ENCODE measurements at regions of chr2 and their contacts with region 1.

Region 1: GRCh38 chr2:102301867-102302362 is 9.4 kb upstream of the IL1RL1 start:
- DNase-seq: peak; percentile 51
- H3K4me3 ChIP-seq: no peak overlapping the region
- H3K27ac ChIP-seq: peak overlapping the region; percentile 2
- H3K4me1 ChIP-seq: peaks cover 38% of the 10 kb centered on the region
- H3K27me3 ChIP-seq: no peaks in the 10 kb centered on the region
- CTCF ChIP-seq: peak; percentile 40 to 41
- POLR2A ChIP-seq: no peak

Region 2: DNA sequence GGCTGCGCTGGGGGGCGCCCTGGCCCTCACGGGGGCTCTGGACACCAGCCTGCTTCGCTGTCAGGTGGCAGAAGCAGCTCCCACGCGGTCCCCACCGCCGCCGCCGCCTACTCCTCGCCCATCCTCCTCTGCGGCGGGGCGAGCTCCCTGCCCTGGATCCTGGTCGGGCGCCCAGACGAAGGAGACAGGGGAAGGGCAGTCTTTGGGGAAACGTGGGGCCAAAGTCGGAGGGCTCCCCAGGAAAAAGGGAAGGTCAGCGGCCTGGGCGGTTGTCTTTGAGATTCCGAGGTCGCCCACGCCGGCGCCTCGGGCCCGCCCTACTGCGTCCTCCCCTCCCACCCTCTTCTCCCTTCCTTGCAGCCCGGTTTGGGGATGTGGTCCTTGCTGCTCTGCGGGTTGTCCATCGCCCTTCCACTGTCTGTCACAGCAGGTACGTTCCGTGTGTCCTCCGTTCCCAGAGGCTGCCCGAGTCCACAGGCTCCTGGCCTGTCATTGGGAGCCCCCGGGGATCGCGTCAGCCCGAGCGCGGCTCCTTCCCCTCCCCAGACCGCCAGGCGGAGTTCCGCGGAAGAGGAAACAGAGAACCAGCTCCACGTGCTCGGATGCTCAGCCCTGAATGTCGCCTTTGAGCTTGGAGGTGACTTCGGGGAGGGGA is 114.3 kb before region 1 on chr2:
- CTCF ChIA-PET with region 1: no interaction called
- POLR2A ChIA-PET with region 1: no interaction called
- dilution Hi-C with region 1: no loop called
- intact Hi-C with region 1: loop called (anchors 1 kb)
- DNase-seq: peak; percentile 40
- H3K4me3 ChIP-seq: peak overlapping the region; percentile 34 to 47 (median 38)
- H3K27ac ChIP-seq: no peak overlapping the region
- H3K4me1 ChIP-seq: peaks cover 18% of the 10 kb centered on the region
- H3K27me3 ChIP-seq: no peaks in the 10 kb centered on the region
- CTCF ChIP-seq: peak in 1 of 2 donors; percentile 43
- POLR2A ChIP-seq: no peak

Region 3: GRCh38 chr2:102271844-102272243 is 30.1 kb before region 1 on chr2:
- CTCF ChIA-PET with region 1: interaction called, 19 read pairs
- POLR2A ChIA-PET with region 1: no interaction called
- dilution Hi-C with region 1: no loop called
- intact Hi-C with region 1: loop called (anchors 2 kb)
- DNase-seq: peak; percentile 15
- H3K4me3 ChIP-seq: no peak overlapping the region
- H3K27ac ChIP-seq: no peak overlapping the region
- H3K4me1 ChIP-seq: peaks cover 7% of the 10 kb centered on the region
- H3K27me3 ChIP-seq: no peaks in the 10 kb centered on the region
- CTCF ChIP-seq: no peak
- POLR2A ChIP-seq: no peak

Region 4: GRCh38 chr2:102336502-102336945 is 34.6 kb after region 1 on chr2:
- CTCF ChIA-PET with region 1: interaction called, 21 read pairs
- POLR2A ChIA-PET with region 1: no interaction called
- dilution Hi-C with region 1: no loop called
- intact Hi-C with region 1: loop called (anchors 1 kb)
- DNase-seq: peak; percentile 68
- H3K4me3 ChIP-seq: peak overlapping the region in 2 of 3 experiments; percentile 74 to 95
- H3K27ac ChIP-seq: peak overlapping the region; percentile 99
- H3K4me1 ChIP-seq: peaks cover 56% of the 10 kb centered on the region
- H3K27me3 ChIP-seq: no peaks in the 10 kb centered on the region
- CTCF ChIP-seq: no peak
- POLR2A ChIP-seq: no peak

Region 5: GRCh38 chr2:102355526-102356380 is 53.8 kb after region 1 on chr2 and contains the start of gene IL18R1:
- CTCF ChIA-PET with region 1: interaction called, 20 read pairs
- POLR2A ChIA-PET with region 1: no interaction called
- dilution Hi-C with region 1: no loop called
- intact Hi-C with region 1: loop called (anchors 1 kb)
- DNase-seq: peak; percentile 71
- H3K4me3 ChIP-seq: peak within 1 kb of the TSS; percentile 70 to 88 (median 79)
- H3K27ac ChIP-seq: peak within 1 kb of the TSS; percentile 63
- H3K4me1 ChIP-seq: peaks cover 13% of the 10 kb centered on the region
- H3K27me3 ChIP-seq: no peaks in the 10 kb centered on the region
- CTCF ChIP-seq: peak; percentile 72 to 84
- POLR2A ChIP-seq: no peak
- total RNA-seq, gene IL18R1: 3.6 and 4.0 TPM in 2 replicates

Region 6: GRCh38 chr2:102717308-102718018 is 415.5 kb after region 1 on chr2:
- CTCF ChIA-PET with region 1: no interaction called
- POLR2A ChIA-PET with region 1: no interaction called
- dilution Hi-C with region 1: no loop called
- intact Hi-C with region 1: no loop called
- DNase-seq: no peak
- H3K4me3 ChIP-seq: no peak overlapping the region
- H3K27ac ChIP-seq: no peak overlapping the region
- H3K4me1 ChIP-seq: no peaks in the 10 kb centered on the region
- H3K27me3 ChIP-seq: no peaks in the 10 kb centered on the region
- CTCF ChIP-seq: no peak
- POLR2A ChIP-seq: no peak